B cell (primary cell): ENCODE measurements at regions of chr6 and their contacts with region 1.

Region 1: GRCh38 chr6:31827286-31828079 is at the start of gene HSPA1B:
- DNase-seq: peak; percentile 92
- ATAC-seq: peak; percentile 72
- H3K4me3 ChIP-seq: peak within 1 kb of the TSS; percentile 69 to 93 (median 80)
- H3K4me3 Mint-ChIP-seq: peak within 1 kb of the TSS; percentile 85
- H3K27ac ChIP-seq: peak within 1 kb of the TSS; percentile 87 to 89
- H3K27ac Mint-ChIP-seq: peak within 1 kb of the TSS; percentile 96
- H3K4me1 ChIP-seq: peaks cover 19 to 41% of the 10 kb centered on the region in 2 donors
- H3K4me1 Mint-ChIP-seq: peaks cover 32% of the 10 kb centered on the region
- H3K27me3 ChIP-seq: no peaks in the 10 kb centered on the region
- H3K27me3 Mint-ChIP-seq: no peaks in the 10 kb centered on the region
- CTCF ChIP-seq: no peak
- total RNA-seq, gene HSPA1B: 79.2 and 89.9 TPM in 2 replicates

Region 2: GRCh38 chr6:31493875-31494694 is 333.4 kb before region 1 on chr6:
- CTCF ChIA-PET with region 1: interaction called, 4 read pairs
- POLR2A ChIA-PET with region 1: interaction called, 12 read pairs
- intact Hi-C with region 1: no loop called
- DNase-seq: peak; percentile 89
- ATAC-seq: peak; percentile 47
- H3K4me3 ChIP-seq: peak overlapping the region; percentile 76 to 91 (median 85)
- H3K4me3 Mint-ChIP-seq: peak overlapping the region; percentile 83
- H3K27ac ChIP-seq: peak overlapping the region; percentile 74 to 80
- H3K27ac Mint-ChIP-seq: peak overlapping the region; percentile 89
- H3K4me1 ChIP-seq: peaks cover 42 to 54% of the 10 kb centered on the region in 2 donors
- H3K4me1 Mint-ChIP-seq: peaks cover 46% of the 10 kb centered on the region
- H3K27me3 ChIP-seq: no peaks in the 10 kb centered on the region
- H3K27me3 Mint-ChIP-seq: no peaks in the 10 kb centered on the region
- CTCF ChIP-seq: peak; percentile 88

Region 3: DNA sequence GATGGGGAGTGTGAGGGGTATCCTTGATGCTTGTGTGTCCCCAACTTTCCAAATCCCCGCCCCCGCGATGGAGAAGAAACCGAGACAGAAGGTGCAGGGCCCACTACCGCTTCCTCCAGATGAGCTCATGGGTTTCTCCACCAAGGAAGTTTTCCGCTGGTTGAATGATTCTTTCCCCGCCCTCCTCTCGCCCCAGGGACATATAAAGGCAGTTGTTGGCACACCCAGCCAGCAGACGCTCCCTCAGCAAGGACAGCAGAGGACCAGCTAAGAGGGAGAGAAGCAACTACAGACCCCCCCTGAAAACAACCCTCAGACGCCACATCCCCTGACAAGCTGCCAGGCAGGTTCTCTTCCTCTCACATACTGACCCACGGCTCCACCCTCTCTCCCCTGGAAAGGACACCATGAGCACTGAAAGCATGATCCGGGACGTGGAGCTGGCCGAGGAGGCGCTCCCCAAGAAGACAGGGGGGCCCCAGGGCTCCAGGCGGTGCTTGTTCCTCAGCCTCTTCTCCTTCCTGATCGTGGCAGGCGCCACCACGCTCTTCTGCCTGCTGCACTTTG is 252.1 kb before region 1 on chr6 and contains the start of gene TNF:
- CTCF ChIA-PET with region 1: interaction called, 10 read pairs
- POLR2A ChIA-PET with region 1: interaction called, 10 read pairs
- intact Hi-C with region 1: no loop called
- DNase-seq: peak; percentile 84
- ATAC-seq: peak; percentile 40
- H3K4me3 ChIP-seq: peak within 1 kb of the TSS; percentile 74 to 87 (median 77)
- H3K4me3 Mint-ChIP-seq: peak within 1 kb of the TSS; percentile 89
- H3K27ac ChIP-seq: peak within 1 kb of the TSS; percentile 77 to 89
- H3K27ac Mint-ChIP-seq: peak within 1 kb of the TSS; percentile 93
- H3K4me1 ChIP-seq: peaks cover 80 to 99% of the 10 kb centered on the region in 2 donors
- H3K4me1 Mint-ChIP-seq: peaks cover 94% of the 10 kb centered on the region
- H3K27me3 ChIP-seq: no peaks in the 10 kb centered on the region
- H3K27me3 Mint-ChIP-seq: no peaks in the 10 kb centered on the region
- CTCF ChIP-seq: no peak
- total RNA-seq, gene TNF: 22.2 and 22.6 TPM in 2 replicates

Region 4: GRCh38 chr6:31665501-31666336 is 161.8 kb before region 1 on chr6 and contains the start of gene CSNK2B:
- CTCF ChIA-PET with region 1: interaction called, 10 read pairs
- POLR2A ChIA-PET with region 1: interaction called, 9 read pairs
- intact Hi-C with region 1: no loop called
- DNase-seq: peak; percentile 98
- ATAC-seq: peak; percentile 87
- H3K4me3 ChIP-seq: peak within 1 kb of the TSS; percentile 58 to 98 (median 85)
- H3K4me3 Mint-ChIP-seq: peak within 1 kb of the TSS; percentile 96
- H3K27ac ChIP-seq: peak within 1 kb of the TSS; percentile 96 to 98
- H3K27ac Mint-ChIP-seq: peak within 1 kb of the TSS; percentile 100
- H3K4me1 ChIP-seq: peaks cover 27 to 47% of the 10 kb centered on the region in 2 donors
- H3K4me1 Mint-ChIP-seq: peaks cover 53% of the 10 kb centered on the region
- H3K27me3 ChIP-seq: no peaks in the 10 kb centered on the region
- H3K27me3 Mint-ChIP-seq: no peaks in the 10 kb centered on the region
- CTCF ChIP-seq: no peak
- total RNA-seq, gene CSNK2B: 141 and 146 TPM in 2 replicates

Region 5: DNA sequence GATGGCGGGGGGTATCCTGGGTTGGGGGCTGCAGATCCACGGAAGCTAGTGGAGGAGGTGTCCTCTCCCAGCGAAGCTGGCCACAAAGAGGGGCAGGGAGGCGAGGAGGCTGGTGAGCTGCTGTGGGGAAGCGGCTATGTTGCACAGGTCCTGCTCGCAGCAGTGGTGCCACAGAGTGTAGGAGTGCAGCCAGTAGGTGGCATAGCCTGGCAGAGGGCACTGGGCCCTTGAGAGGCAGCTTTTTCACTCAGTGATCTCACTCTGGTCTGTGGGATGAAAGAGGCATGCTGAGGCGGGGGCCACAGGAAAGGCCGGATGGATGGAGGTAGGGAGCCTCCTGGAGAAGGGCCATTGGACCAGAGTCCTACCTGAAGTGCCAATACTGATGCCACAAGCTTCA is 115.2 kb before region 1 on chr6:
- CTCF ChIA-PET with region 1: interaction called, 14 read pairs
- POLR2A ChIA-PET with region 1: no interaction called
- intact Hi-C with region 1: no loop called
- DNase-seq: peak; percentile 54
- ATAC-seq: peak; percentile 71
- H3K4me3 ChIP-seq: no peak overlapping the region
- H3K4me3 Mint-ChIP-seq: no peak overlapping the region
- H3K27ac ChIP-seq: no peak overlapping the region
- H3K27ac Mint-ChIP-seq: no peak overlapping the region
- H3K4me1 ChIP-seq: peaks cover 10 to 16% of the 10 kb centered on the region in 2 donors
- H3K4me1 Mint-ChIP-seq: peaks cover 14% of the 10 kb centered on the region
- H3K27me3 ChIP-seq: peaks cover 0 to 6% (median 0%) of the 10 kb centered on the region in 4 experiments
- H3K27me3 Mint-ChIP-seq: peaks cover 3% of the 10 kb centered on the region
- CTCF ChIP-seq: peak; percentile 42

Region 6: GRCh38 chr6:31769684-31770371 is 57.7 kb before region 1 on chr6:
- CTCF ChIA-PET with region 1: interaction called, 24 read pairs
- POLR2A ChIA-PET with region 1: interaction called, 6 read pairs
- intact Hi-C with region 1: loop called (anchors 5 kb)
- DNase-seq: peak; percentile 87
- ATAC-seq: peak; percentile 98
- H3K4me3 ChIP-seq: no peak overlapping the region
- H3K4me3 Mint-ChIP-seq: no peak overlapping the region
- H3K27ac ChIP-seq: no peak overlapping the region
- H3K27ac Mint-ChIP-seq: peak overlapping the region; percentile 32
- H3K4me1 ChIP-seq: peaks cover 0 to 9% of the 10 kb centered on the region in 2 donors
- H3K4me1 Mint-ChIP-seq: peaks cover 13% of the 10 kb centered on the region
- H3K27me3 ChIP-seq: no peaks in the 10 kb centered on the region
- H3K27me3 Mint-ChIP-seq: no peaks in the 10 kb centered on the region
- CTCF ChIP-seq: peak; percentile 74

Region 7: DNA sequence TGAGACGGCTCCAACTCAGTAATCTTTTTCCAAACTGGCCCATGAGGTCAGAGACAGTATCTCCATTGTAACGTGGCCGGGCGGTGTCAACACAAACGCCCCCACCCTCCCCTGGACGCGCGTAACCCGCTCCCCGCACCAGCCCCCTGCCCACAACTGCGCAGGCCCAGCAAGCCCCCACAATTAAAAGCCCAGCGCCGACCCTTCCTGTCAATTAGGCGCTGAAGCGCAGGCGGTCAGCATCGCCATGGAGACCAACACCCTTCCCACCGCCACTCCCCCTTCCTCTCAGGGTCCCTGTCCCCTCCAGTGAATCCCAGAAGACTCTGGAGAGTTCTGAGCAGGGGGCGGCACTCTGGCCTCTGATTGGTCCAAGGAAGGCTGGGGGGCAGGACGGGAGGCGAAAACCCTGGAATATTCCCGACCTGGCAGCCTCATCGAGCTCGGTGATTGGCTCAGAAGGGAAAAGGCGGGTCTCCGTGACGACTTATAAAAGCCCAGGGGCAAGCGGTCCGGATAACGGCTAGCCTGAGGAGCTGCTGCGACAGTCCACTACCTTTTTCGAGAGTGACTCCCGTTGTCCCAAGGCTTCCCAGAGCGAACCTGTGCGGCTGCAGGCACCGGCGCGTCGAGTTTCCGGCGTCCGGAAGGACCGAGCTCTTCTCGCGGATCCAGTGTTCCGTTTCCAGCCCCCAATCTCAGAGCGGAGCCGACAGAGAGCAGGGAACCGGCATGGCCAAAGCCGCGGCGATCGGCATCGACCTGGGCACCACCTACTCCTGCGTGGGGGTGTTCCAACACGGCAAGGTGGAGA is 12.3 kb before region 1 on chr6 and contains the starts of genes HSPA1A and HSPA1L:
- CTCF ChIA-PET with region 1: interaction called, 49 read pairs
- POLR2A ChIA-PET with region 1: interaction called, 37 read pairs
- intact Hi-C with region 1: loop called (anchors 2 kb)
- DNase-seq: peak; percentile 74
- ATAC-seq: peak; percentile 59
- H3K4me3 ChIP-seq: peak within 1 kb of the TSS; percentile 50 to 79 (median 73)
- H3K4me3 Mint-ChIP-seq: peak within 1 kb of the TSS; percentile 96
- H3K27ac ChIP-seq: peak within 1 kb of the TSS; percentile 11 to 73
- H3K27ac Mint-ChIP-seq: peak within 1 kb of the TSS; percentile 93
- H3K4me1 ChIP-seq: peaks cover 15 to 30% of the 10 kb centered on the region in 2 donors
- H3K4me1 Mint-ChIP-seq: peaks cover 22% of the 10 kb centered on the region
- H3K27me3 ChIP-seq: no peaks in the 10 kb centered on the region
- H3K27me3 Mint-ChIP-seq: no peaks in the 10 kb centered on the region
- CTCF ChIP-seq: no peak
- total RNA-seq, gene HSPA1A: 58.8 and 61.2 TPM in 2 replicates
- total RNA-seq, gene HSPA1L: 2.0 and 2.4 TPM in 2 replicates

Region 8: GRCh38 chr6:32589598-32590449 is 762.3 kb after region 1 on chr6 and contains the start of gene HLA-DRB1:
- CTCF ChIA-PET with region 1: no interaction called
- POLR2A ChIA-PET with region 1: no interaction called
- intact Hi-C with region 1: no loop called
- DNase-seq: peak; percentile 87
- ATAC-seq: peak; percentile 94
- H3K4me3 ChIP-seq: peak within 1 kb of the TSS in 4 of 5 experiments; percentile 52 to 72 (median 62)
- H3K4me3 Mint-ChIP-seq: peak within 1 kb of the TSS; percentile 97
- H3K27ac ChIP-seq: peak within 1 kb of the TSS; percentile 74 to 86
- H3K27ac Mint-ChIP-seq: peak within 1 kb of the TSS; percentile 100
- H3K4me1 ChIP-seq: peaks cover 0 to 13% of the 10 kb centered on the region in 2 donors
- H3K4me1 Mint-ChIP-seq: peaks cover 63% of the 10 kb centered on the region
- H3K27me3 ChIP-seq: no peaks in the 10 kb centered on the region
- H3K27me3 Mint-ChIP-seq: no peaks in the 10 kb centered on the region
- CTCF ChIP-seq: no peak
- total RNA-seq, gene HLA-DRB1: 559 and 584 TPM in 2 replicates